Cardiac septum (tissue), 1 donor: ENCODE measurements at regions of chr7 and their contacts with region 1.

Region 1: GRCh38 chr7:79452032-79452494 is 1.4 kb downstream of the MAGI2 start:
- DNase-seq: peak; percentile 92

Region 2: DNA sequence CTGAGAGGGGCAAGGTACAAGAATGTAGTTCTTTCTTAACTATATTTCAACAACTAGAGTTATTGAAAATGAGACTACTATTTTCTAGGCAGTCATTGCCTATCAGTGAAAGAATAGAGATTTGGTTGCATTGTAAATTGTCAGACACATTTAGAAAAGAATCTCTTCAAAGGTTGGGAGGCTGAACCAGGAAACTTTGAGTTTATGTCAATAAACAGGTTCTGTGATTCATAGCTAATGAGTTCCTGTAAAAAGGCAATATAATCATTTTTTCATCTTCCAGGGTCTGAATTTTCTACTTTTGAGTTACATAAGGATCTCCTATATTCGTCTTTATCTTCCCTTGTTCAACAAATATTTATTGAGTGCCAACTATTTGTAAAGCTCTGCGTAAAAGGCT is 45.7 kb before region 1 on chr7:
- intact Hi-C with region 1: loop called (anchors 5 kb)
- DNase-seq: no peak